ENCODE measurements at regions of chr2 and their contacts with region 1.

Region 1: DNA sequence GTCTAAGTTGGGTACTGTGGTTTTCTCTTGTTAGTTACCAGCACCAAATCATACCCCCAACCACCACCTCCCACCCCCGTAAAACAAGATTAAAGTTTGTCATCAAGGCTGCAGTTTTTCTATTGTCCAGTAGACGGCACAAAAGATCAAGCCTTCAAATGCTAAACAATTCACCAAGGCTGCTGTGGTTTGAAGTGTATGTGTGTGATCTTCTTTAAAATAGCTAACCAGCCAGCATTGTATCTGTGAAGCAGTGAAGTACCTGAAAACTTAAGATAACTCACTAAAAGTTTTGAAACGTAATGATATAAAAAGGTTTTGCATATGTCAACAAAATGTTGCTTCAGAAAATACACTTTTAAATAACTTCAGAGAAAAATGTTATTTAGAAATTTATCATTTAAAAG is 5.9 kb upstream of the MEIS1 start:
- DNase-seq: no peak
- H3K4me3 ChIP-seq: no peak overlapping the region
- H3K27ac ChIP-seq: peak overlapping the region; percentile 47 to 99 (median 95)
- H3K4me1 ChIP-seq: peaks cover 0 to 51% (median 38%) of the 10 kb centered on the region in 4 donors
- H3K27me3 ChIP-seq: peaks cover 0 to 7% (median 0%) of the 10 kb centered on the region in 3 donors
- CTCF ChIP-seq: peak; percentile 85 to 95 (median 91)
- EP300 ChIP-seq: no peak
- POLR2A ChIP-seq: no peak

Region 2: GRCh38 chr2:65640793-65641103 is 788.3 kb before region 1 on chr2:
- intact Hi-C with region 1: loop called (anchors 1 kb)
- DNase-seq: no peak
- H3K4me3 ChIP-seq: no peak overlapping the region
- H3K27ac ChIP-seq: peak overlapping the region in 1 of 4 donors; percentile 79
- H3K4me1 ChIP-seq: peaks cover 0 to 43% (median 30%) of the 10 kb centered on the region in 4 donors
- H3K27me3 ChIP-seq: no peaks in the 10 kb centered on the region
- CTCF ChIP-seq: no peak
- EP300 ChIP-seq: no peak
- POLR2A ChIP-seq: no peak

Region 3: GRCh38 chr2:65918760-65919187 is 510.3 kb before region 1 on chr2:
- intact Hi-C with region 1: loop called (anchors 10 kb)
- DNase-seq: no peak
- H3K4me3 ChIP-seq: no peak overlapping the region
- H3K27ac ChIP-seq: peak overlapping the region in 2 of 4 donors; percentile 34 to 54
- H3K4me1 ChIP-seq: peaks cover 0 to 30% (median 22%) of the 10 kb centered on the region in 4 donors
- H3K27me3 ChIP-seq: no peaks in the 10 kb centered on the region
- CTCF ChIP-seq: no peak
- EP300 ChIP-seq: no peak
- POLR2A ChIP-seq: no peak

Region 4: DNA sequence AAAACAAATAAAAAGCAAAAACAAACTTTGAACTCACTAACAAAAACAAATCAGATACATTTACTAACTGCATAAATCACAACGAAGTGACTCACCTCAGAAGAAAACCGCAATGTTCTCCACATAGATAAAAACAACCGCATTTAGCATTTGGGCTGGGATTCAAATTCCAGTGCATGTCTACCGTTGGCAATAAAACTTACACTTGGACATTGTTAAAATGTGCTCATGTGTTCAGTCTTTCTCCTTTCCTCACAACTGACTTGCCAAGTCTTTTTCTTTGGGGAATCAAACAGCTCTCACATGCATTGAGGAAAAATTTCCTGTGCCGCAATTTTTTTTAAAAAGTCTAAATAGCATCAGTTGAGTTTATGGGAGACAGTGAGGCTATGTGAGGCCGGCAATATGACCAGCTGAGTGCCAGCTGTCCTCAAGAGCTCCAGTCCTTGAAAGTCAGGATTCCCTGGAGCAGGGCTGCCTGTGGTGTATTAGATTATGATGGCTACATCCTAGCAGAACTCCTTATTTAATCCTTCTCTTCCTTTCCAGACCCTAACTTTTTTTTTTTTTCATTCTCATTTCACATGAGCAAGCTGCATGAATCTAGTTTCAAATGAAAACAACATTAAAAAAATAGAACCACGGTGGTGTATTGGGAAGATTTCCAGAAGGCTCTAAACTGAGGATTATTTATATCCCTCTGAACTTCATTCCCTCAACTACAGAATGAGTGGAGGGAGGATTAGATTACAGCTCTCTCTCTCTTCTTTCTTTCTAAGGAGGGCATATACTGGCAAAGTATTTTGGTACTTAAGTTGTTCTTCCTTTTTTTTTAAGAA is 64.4 kb before region 1 on chr2:
- intact Hi-C with region 1: loop called (anchors 5 kb)
- DNase-seq: peak; percentile 79
- H3K4me3 ChIP-seq: peak overlapping the region in 1 of 4 donors; percentile 12
- H3K27ac ChIP-seq: peak overlapping the region in 3 of 4 donors; percentile 68 to 81 (median 79)
- H3K4me1 ChIP-seq: peaks cover 0 to 50% (median 24%) of the 10 kb centered on the region in 4 donors
- H3K27me3 ChIP-seq: no peaks in the 10 kb centered on the region
- CTCF ChIP-seq: no peak
- EP300 ChIP-seq: peak in 3 of 4 donors; percentile 32 to 68 (median 32)
- POLR2A ChIP-seq: no peak

Region 5: GRCh38 chr2:66526180-66526579 is 97.1 kb after region 1 on chr2:
- intact Hi-C with region 1: no loop called
- DNase-seq: no peak
- H3K4me3 ChIP-seq: no peak overlapping the region
- H3K27ac ChIP-seq: peak overlapping the region in 3 of 4 donors; percentile 31 to 63 (median 47)
- H3K4me1 ChIP-seq: peaks cover 0 to 99% (median 70%) of the 10 kb centered on the region in 4 donors
- H3K27me3 ChIP-seq: no peaks in the 10 kb centered on the region
- CTCF ChIP-seq: no peak
- EP300 ChIP-seq: no peak
- POLR2A ChIP-seq: no peak

Region 6: GRCh38 chr2:68031542-68032160 is 1602.6 kb after region 1 on chr2:
- intact Hi-C with region 1: loop called (anchors 10 kb)
- DNase-seq: no peak
- H3K4me3 ChIP-seq: no peak overlapping the region
- H3K27ac ChIP-seq: no peak overlapping the region
- H3K4me1 ChIP-seq: peaks cover 0 to 8% (median 3%) of the 10 kb centered on the region in 4 donors
- H3K27me3 ChIP-seq: no peaks in the 10 kb centered on the region
- CTCF ChIP-seq: peak; percentile 47 to 67 (median 59)
- EP300 ChIP-seq: no peak
- POLR2A ChIP-seq: no peak